B cell (primary cell): ENCODE measurements at regions of chr2 and their contacts with region 1.

Region 1: DNA sequence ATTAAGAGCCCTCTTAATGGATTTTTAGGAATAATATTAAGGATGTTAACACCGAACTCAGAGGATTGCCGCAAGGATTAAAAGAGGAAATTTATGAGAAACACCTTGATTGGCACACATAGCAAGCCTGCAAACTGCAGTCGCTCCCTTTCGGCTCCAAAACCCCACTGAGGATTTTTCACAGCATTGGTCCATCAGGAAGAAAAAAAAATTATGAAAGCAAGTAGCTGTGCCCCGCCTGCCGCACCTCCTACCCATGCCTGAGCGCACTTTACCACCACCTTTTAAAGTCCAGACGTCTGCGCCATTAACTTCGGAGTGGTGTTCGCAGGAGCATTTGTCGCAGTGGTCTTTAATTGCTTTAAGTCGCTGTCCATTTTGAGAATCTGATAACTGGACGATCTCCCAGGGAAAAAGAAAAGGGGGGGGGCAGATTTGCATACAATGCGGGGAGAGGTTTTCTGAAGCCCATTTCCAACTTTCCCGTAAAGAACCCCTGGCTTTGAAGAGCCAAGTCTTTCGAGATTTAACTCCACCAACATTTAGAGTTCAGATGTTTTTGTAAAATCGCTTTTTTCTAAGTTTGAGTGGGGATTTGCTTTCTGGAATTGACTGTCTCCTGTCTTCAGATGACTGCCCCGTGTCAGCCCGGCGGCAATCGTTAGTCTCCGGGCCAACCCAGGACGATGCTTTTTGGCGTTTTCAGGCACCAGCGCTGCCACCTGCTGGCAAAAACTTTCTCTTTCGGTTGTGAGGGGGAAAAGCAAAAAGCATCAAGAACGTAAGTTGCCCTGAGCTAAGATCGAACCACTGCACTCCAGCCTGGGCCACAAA is 914 bp upstream of the TRABD2A start:
- DNase-seq: peak; percentile 90
- ATAC-seq: peak; percentile 78
- H3K4me3 ChIP-seq: peak overlapping the region; percentile 66 to 98 (median 83)
- H3K4me3 Mint-ChIP-seq: peak overlapping the region; percentile 92
- H3K27ac ChIP-seq: peak overlapping the region; percentile 72 to 92
- H3K27ac Mint-ChIP-seq: peak overlapping the region; percentile 95
- H3K4me1 ChIP-seq: peaks cover 16 to 31% of the 10 kb centered on the region in 2 donors
- H3K4me1 Mint-ChIP-seq: peaks cover 36% of the 10 kb centered on the region
- H3K27me3 ChIP-seq: no peaks in the 10 kb centered on the region
- H3K27me3 Mint-ChIP-seq: no peaks in the 10 kb centered on the region
- CTCF ChIP-seq: peak; percentile 78

Region 2: DNA sequence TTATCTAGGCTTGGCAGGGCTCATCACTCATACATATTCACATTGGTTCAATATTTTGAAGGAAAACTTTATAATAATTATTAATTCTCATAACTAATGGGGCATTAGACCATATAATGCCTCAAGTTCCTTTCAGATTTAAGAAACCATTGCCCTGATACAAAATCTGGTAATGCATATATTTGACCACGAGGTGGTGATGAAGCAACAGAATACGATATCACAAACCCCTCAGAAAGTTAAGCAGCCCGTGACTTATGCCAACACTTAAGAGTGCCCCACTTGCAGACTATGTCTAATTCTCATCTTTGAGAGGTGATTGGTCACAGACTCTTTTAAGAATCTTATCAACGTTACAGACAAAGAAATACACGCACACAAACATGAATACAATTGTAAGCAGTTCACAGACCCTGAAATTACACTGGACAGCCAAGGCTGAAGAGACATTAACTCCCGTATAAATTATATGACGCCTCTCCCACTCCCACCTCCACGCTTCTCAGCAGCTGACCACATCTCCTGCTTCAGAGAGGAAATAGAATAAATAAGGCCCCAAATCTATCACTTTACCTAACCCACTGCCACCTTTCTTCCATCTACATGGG is 386.2 kb before region 1 on chr2:
- CTCF ChIA-PET with region 1: interaction called, 5 read pairs
- POLR2A ChIA-PET with region 1: no interaction called
- intact Hi-C with region 1: loop called (anchors 1 kb)
- DNase-seq: peak; percentile 81
- ATAC-seq: peak; percentile 89
- H3K4me3 ChIP-seq: no peak overlapping the region
- H3K4me3 Mint-ChIP-seq: no peak overlapping the region
- H3K27ac ChIP-seq: no peak overlapping the region
- H3K27ac Mint-ChIP-seq: no peak overlapping the region
- H3K4me1 ChIP-seq: no peaks in the 10 kb centered on the region
- H3K4me1 Mint-ChIP-seq: no peaks in the 10 kb centered on the region
- H3K27me3 ChIP-seq: no peaks in the 10 kb centered on the region
- H3K27me3 Mint-ChIP-seq: no peaks in the 10 kb centered on the region
- CTCF ChIP-seq: peak; percentile 83

Region 3: DNA sequence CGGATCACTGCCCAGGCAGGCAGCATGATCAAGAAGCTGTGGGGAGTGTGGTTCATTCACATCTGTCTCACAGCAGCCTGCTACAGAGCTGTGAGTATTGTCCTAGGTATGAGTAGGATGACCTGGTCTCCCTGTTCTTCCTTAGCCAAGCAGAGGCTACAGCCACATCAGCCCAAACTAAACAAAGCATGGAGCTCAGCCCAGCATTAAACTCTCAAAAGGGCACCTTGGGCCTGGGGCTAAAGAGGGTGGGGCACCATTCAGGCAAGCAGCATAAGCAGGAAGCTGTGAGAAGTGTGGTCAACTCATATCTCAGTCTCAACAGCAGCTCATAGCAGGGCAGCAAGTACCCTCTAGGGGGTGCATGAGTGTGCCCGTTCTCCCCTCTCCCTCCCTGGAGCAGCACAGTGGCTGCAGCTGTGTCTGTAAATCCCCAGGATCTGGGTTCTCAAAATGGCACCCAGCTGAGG is 140.5 kb before region 1 on chr2:
- CTCF ChIA-PET with region 1: interaction called, 10 read pairs
- POLR2A ChIA-PET with region 1: no interaction called
- intact Hi-C with region 1: loop called (anchors 5 kb)
- DNase-seq: peak; percentile 52
- ATAC-seq: peak; percentile 77
- H3K4me3 ChIP-seq: no peak overlapping the region
- H3K4me3 Mint-ChIP-seq: no peak overlapping the region
- H3K27ac ChIP-seq: no peak overlapping the region
- H3K27ac Mint-ChIP-seq: no peak overlapping the region
- H3K4me1 ChIP-seq: peaks cover 3 to 8% of the 10 kb centered on the region in 2 donors
- H3K4me1 Mint-ChIP-seq: peaks cover 3% of the 10 kb centered on the region
- H3K27me3 ChIP-seq: peaks cover 0 to 10% (median 4%) of the 10 kb centered on the region in 4 experiments
- H3K27me3 Mint-ChIP-seq: peaks cover 40% of the 10 kb centered on the region
- CTCF ChIP-seq: peak; percentile 41

Region 4: DNA sequence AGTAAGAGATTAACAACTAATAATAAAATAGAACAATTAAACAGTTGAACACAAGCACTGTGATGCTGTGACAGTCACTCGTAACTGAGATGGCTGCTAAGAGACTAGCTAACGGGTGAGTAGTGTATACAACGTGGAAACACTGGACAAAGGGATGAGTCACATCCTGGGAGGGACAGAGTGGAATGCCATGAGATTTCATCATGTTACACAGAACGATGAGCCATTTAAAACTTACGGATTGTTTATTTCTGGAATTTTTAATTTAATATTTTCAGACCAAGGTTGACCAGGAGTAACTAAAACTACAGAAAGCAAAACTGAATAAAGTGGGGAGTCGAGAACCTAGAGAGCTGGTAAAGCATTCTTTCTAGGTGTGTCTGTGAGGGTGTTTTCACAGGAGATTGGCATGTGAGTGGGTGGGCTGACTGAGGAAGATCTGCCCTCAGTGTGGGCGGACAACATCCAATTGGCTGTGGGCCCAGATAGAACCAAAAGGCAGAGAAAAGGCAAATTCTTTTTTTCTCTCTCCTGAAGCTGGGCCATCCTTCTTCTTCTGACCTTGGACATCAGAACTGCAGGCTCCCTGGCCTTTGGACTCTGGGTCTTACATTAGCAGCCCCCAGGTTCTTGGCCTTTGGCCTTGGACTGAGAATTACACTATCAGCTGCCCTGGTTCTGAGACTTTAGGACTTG is 38.2 kb after region 1 on chr2:
- CTCF ChIA-PET with region 1: interaction called, 316 read pairs
- POLR2A ChIA-PET with region 1: interaction called, 13 read pairs
- intact Hi-C with region 1: loop called (anchors 1 kb)
- DNase-seq: peak; percentile 52
- ATAC-seq: peak; percentile 52
- H3K4me3 ChIP-seq: peak overlapping the region in 4 of 5 experiments; percentile 8 to 55 (median 24)
- H3K4me3 Mint-ChIP-seq: peak overlapping the region; percentile 64
- H3K27ac ChIP-seq: peak overlapping the region; percentile 89 to 90
- H3K27ac Mint-ChIP-seq: peak overlapping the region; percentile 84
- H3K4me1 ChIP-seq: peaks cover 51 to 60% of the 10 kb centered on the region in 2 donors
- H3K4me1 Mint-ChIP-seq: peaks cover 56% of the 10 kb centered on the region
- H3K27me3 ChIP-seq: no peaks in the 10 kb centered on the region
- H3K27me3 Mint-ChIP-seq: no peaks in the 10 kb centered on the region
- CTCF ChIP-seq: no peak

Region 5: GRCh38 chr2:84958135-84959044 is 76.6 kb after region 1 on chr2:
- CTCF ChIA-PET with region 1: no interaction called
- POLR2A ChIA-PET with region 1: no interaction called
- intact Hi-C with region 1: no loop called
- DNase-seq: no peak
- ATAC-seq: no peak
- H3K4me3 ChIP-seq: no peak overlapping the region
- H3K4me3 Mint-ChIP-seq: no peak overlapping the region
- H3K27ac ChIP-seq: no peak overlapping the region
- H3K27ac Mint-ChIP-seq: peak overlapping the region; percentile 41
- H3K4me1 ChIP-seq: peaks cover 19 to 24% of the 10 kb centered on the region in 2 donors
- H3K4me1 Mint-ChIP-seq: peaks cover 37% of the 10 kb centered on the region
- H3K27me3 ChIP-seq: no peaks in the 10 kb centered on the region
- H3K27me3 Mint-ChIP-seq: no peaks in the 10 kb centered on the region
- CTCF ChIP-seq: no peak

Region 6: DNA sequence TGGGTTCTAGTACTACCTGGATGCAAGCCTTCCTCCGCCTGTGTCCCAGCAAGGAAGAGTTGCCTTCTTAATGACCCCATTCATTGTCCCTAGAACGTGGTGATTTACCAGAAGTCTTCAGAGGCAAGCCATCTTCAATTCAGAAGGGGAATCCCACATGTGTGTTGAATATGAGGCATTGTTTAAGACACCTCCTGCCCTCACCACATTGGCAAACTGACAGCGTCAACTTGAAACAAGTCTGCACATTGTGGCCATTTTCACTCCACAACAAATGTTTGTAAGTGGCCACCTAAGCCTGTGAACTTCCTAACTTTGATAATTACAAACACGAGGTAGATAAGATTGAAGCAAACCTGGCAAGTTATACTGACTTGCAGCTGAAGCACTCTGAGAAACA is 335.1 kb after region 1 on chr2:
- CTCF ChIA-PET with region 1: no interaction called
- POLR2A ChIA-PET with region 1: no interaction called
- intact Hi-C with region 1: no loop called
- DNase-seq: no peak
- ATAC-seq: no peak
- H3K4me3 ChIP-seq: no peak overlapping the region
- H3K4me3 Mint-ChIP-seq: no peak overlapping the region
- H3K27ac ChIP-seq: no peak overlapping the region
- H3K27ac Mint-ChIP-seq: no peak overlapping the region
- H3K4me1 ChIP-seq: no peaks in the 10 kb centered on the region
- H3K4me1 Mint-ChIP-seq: no peaks in the 10 kb centered on the region
- H3K27me3 ChIP-seq: peaks cover 0 to 8% (median 3%) of the 10 kb centered on the region in 4 experiments
- H3K27me3 Mint-ChIP-seq: peaks cover 39% of the 10 kb centered on the region
- CTCF ChIP-seq: no peak

Region 7: GRCh38 chr2:85437488-85438284 is 555.9 kb after region 1 on chr2:
- CTCF ChIA-PET with region 1: no interaction called
- POLR2A ChIA-PET with region 1: no interaction called
- intact Hi-C with region 1: no loop called
- DNase-seq: peak; percentile 92
- ATAC-seq: peak; percentile 87
- H3K4me3 ChIP-seq: peak overlapping the region in 4 of 5 experiments; percentile 41 to 65 (median 58)
- H3K4me3 Mint-ChIP-seq: peak overlapping the region; percentile 91
- H3K27ac ChIP-seq: peak overlapping the region; percentile 74 to 86
- H3K27ac Mint-ChIP-seq: peak overlapping the region; percentile 98
- H3K4me1 ChIP-seq: peaks cover 30 to 40% of the 10 kb centered on the region in 2 donors
- H3K4me1 Mint-ChIP-seq: peaks cover 38% of the 10 kb centered on the region
- H3K27me3 ChIP-seq: peaks cover 0 to 2% (median 0%) of the 10 kb centered on the region in 4 experiments
- H3K27me3 Mint-ChIP-seq: no peaks in the 10 kb centered on the region
- CTCF ChIP-seq: no peak